CD8-positive, alpha-beta memory T cell (primary cell): ENCODE measurements at regions of chr1 and their contacts with region 1.

Region 1: GRCh38 chr1:150561974-150562445 is 12.8 kb downstream of the ADAMTSL4 start:
- DNase-seq: peak; percentile 60 to 83 (median 70)
- H3K4me3 ChIP-seq: peak overlapping the region; percentile 91
- H3K4me3 Mint-ChIP-seq: peak overlapping the region; percentile 85 to 98 (median 97)
- H3K27ac ChIP-seq: peak overlapping the region; percentile 94
- H3K27ac Mint-ChIP-seq: peak overlapping the region; percentile 96 to 100 (median 98)
- H3K4me1 ChIP-seq: peaks cover 64% of the 10 kb centered on the region
- H3K4me1 Mint-ChIP-seq: peaks cover 59 to 69% (median 59%) of the 10 kb centered on the region in 3 donors
- H3K27me3 ChIP-seq: no peaks in the 10 kb centered on the region
- H3K27me3 Mint-ChIP-seq: no peaks in the 10 kb centered on the region

Region 2: GRCh38 chr1:150479927-150480352 is 82.1 kb before region 1 on chr1:
- CTCF ChIA-PET with region 1: no interaction called
- POLR2A ChIA-PET with region 1: no interaction called
- DNase-seq: no peak
- H3K4me3 ChIP-seq: no peak overlapping the region
- H3K4me3 Mint-ChIP-seq: no peak overlapping the region
- H3K27ac ChIP-seq: no peak overlapping the region
- H3K27ac Mint-ChIP-seq: peak overlapping the region in 1 of 8 donors; percentile 14
- H3K4me1 ChIP-seq: no peaks in the 10 kb centered on the region
- H3K4me1 Mint-ChIP-seq: peaks cover 0 to 7% (median 0%) of the 10 kb centered on the region in 3 donors
- H3K27me3 ChIP-seq: no peaks in the 10 kb centered on the region
- H3K27me3 Mint-ChIP-seq: no peaks in the 10 kb centered on the region

Region 3: DNA sequence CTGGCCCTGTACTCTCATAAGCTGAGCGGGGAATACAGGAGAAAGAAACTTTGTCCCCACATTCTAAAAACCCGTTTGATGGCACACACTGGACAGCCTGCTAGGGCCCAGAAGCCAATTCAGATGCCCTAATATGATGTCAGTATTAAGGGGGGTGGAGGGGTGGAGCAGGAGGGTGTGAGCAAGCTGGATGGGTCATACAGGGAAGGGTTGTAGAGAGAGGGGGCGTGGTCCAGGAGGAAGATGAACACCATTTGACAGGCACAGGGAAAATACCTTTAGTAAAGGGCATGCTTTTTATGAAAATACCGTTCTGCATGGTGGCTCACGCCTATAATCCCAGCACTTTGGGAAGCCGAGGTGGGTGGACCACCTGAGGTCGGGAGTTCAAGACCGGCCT is 68.8 kb before region 1 on chr1:
- CTCF ChIA-PET with region 1: no interaction called
- POLR2A ChIA-PET with region 1: no interaction called
- DNase-seq: no peak
- H3K4me3 ChIP-seq: no peak overlapping the region
- H3K4me3 Mint-ChIP-seq: no peak overlapping the region
- H3K27ac ChIP-seq: no peak overlapping the region
- H3K27ac Mint-ChIP-seq: no peak overlapping the region
- H3K4me1 ChIP-seq: peaks cover 2% of the 10 kb centered on the region
- H3K4me1 Mint-ChIP-seq: peaks cover 7 to 11% (median 7%) of the 10 kb centered on the region in 3 donors
- H3K27me3 ChIP-seq: no peaks in the 10 kb centered on the region
- H3K27me3 Mint-ChIP-seq: no peaks in the 10 kb centered on the region

Region 4: GRCh38 chr1:150548632-150549495 is 13.1 kb before region 1 on chr1 and contains the start of gene ADAMTSL4:
- CTCF ChIA-PET with region 1: interaction called, 40 read pairs
- POLR2A ChIA-PET with region 1: interaction called, 15 read pairs
- DNase-seq: peak in 1 of 5 donors; percentile 33
- H3K4me3 ChIP-seq: peak within 1 kb of the TSS; percentile 56
- H3K4me3 Mint-ChIP-seq: peak within 1 kb of the TSS; percentile 76 to 92 (median 81)
- H3K27ac ChIP-seq: peak within 1 kb of the TSS; percentile 67
- H3K27ac Mint-ChIP-seq: peak within 1 kb of the TSS in 2 of 8 donors; percentile 29 to 78
- H3K4me1 ChIP-seq: peaks cover 7% of the 10 kb centered on the region
- H3K4me1 Mint-ChIP-seq: peaks cover 11 to 31% (median 14%) of the 10 kb centered on the region in 3 donors
- H3K27me3 ChIP-seq: no peaks in the 10 kb centered on the region
- H3K27me3 Mint-ChIP-seq: peaks cover 24 to 26% of the 10 kb centered on the region in 2 donors
- total RNA-seq, gene ADAMTSL4: 0.22 to 0.31 TPM

Region 5: GRCh38 chr1:150606463-150607148 is 44.6 kb after region 1 on chr1:
- CTCF ChIA-PET with region 1: interaction called, 11 read pairs
- POLR2A ChIA-PET with region 1: interaction called, 4 read pairs
- DNase-seq: no peak
- H3K4me3 ChIP-seq: no peak overlapping the region
- H3K4me3 Mint-ChIP-seq: no peak overlapping the region
- H3K27ac ChIP-seq: no peak overlapping the region
- H3K27ac Mint-ChIP-seq: peak overlapping the region in 3 of 8 donors; percentile 5 to 89 (median 17)
- H3K4me1 ChIP-seq: peaks cover 11% of the 10 kb centered on the region
- H3K4me1 Mint-ChIP-seq: peaks cover 7 to 27% (median 11%) of the 10 kb centered on the region in 3 donors
- H3K27me3 ChIP-seq: no peaks in the 10 kb centered on the region
- H3K27me3 Mint-ChIP-seq: no peaks in the 10 kb centered on the region

Region 6: DNA sequence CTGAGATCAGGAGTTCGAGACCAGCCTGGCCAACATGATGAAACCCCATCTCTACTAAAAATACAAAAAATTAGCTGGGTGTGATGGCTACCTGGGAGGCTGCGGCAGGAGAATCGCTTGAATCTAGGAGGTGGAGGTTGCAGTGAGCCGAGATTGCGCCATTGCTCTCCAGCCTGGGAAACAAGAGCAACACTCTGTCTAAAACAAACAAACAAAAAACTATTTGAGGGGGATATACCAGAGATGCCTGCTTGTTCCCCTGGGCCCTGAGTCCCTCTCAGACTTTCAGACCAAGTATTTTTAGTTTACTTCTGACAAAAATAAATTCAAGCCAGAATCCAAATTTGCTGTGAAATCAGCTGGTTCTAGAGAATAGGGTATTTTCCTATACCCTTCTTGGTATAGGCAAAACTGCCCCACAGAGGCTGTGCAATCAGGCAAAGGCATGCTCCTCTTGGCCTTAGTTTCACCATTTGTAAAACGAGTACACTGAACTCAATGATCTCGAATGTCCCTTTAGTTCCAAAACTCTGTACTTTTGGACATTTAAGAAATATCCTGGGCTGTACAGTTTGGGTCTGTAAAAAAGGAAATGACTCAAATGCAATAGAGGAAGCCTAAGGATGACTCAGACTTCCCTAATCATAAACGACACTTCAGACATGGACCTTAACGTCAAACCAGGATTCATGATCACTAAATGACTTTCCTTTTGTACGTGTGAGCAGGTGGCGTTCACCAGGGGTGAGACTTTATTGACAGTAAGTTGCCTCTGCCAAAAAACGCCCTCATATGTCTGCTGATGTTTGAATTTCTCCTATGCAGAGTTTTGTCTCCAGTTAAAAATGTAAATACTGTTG is 51.3 kb after region 1 on chr1:
- CTCF ChIA-PET with region 1: interaction called, 244 read pairs
- POLR2A ChIA-PET with region 1: interaction called, 15 read pairs
- DNase-seq: peak in 4 of 5 donors; percentile 36 to 70 (median 51)
- H3K4me3 ChIP-seq: no peak overlapping the region
- H3K4me3 Mint-ChIP-seq: peak overlapping the region; percentile 27 to 75 (median 59)
- H3K27ac ChIP-seq: peak overlapping the region; percentile 76
- H3K27ac Mint-ChIP-seq: peak overlapping the region; percentile 94 to 100 (median 99)
- H3K4me1 ChIP-seq: peaks cover 51% of the 10 kb centered on the region
- H3K4me1 Mint-ChIP-seq: peaks cover 50 to 72% (median 56%) of the 10 kb centered on the region in 3 donors
- H3K27me3 ChIP-seq: no peaks in the 10 kb centered on the region
- H3K27me3 Mint-ChIP-seq: no peaks in the 10 kb centered on the region

Region 7: DNA sequence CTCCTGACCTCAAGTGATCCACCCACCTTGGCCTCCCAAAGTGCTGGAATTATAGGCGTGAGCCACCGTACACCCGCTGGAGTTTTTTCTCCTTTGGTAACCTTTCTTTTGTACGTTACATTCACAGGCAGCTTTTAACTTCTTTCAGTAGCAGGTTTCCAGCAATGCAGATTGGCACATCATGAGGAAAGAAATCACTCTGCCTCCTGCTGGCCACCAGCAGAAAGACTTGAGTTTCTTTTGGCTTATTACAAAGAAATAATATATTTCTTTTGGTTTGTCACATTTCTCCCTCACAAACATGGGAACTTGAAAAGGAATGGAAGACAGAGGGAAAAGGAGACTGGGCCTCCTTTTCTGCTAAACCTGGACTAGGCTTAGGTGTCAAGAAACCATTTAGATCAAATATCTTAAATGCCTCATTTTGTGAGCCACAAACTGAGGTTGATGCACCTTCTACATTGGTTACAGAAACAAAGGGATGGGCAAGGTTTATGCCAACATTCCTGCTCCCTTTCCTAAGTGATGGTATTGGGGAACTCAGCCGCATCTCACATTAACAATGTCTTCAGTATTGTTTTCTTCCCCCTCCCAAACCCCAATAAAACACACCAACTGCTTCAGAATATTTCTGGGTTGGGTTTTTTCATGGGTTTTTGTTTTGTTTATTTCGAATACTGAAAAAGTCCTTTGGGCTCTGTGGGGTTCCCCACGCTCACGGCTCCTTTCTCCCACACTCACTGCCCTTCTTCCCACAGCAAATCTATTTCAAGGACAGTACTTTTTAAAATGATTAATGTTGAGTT is 59.7 kb after region 1 on chr1:
- CTCF ChIA-PET with region 1: interaction called, 244 read pairs
- POLR2A ChIA-PET with region 1: interaction called, 42 read pairs
- DNase-seq: peak; percentile 40 to 79 (median 54)
- H3K4me3 ChIP-seq: no peak overlapping the region
- H3K4me3 Mint-ChIP-seq: peak overlapping the region in 2 of 7 donors; percentile 35 to 37
- H3K27ac ChIP-seq: no peak overlapping the region
- H3K27ac Mint-ChIP-seq: peak overlapping the region; percentile 35 to 95 (median 86)
- H3K4me1 ChIP-seq: peaks cover 30% of the 10 kb centered on the region
- H3K4me1 Mint-ChIP-seq: peaks cover 29 to 63% (median 55%) of the 10 kb centered on the region in 3 donors
- H3K27me3 ChIP-seq: no peaks in the 10 kb centered on the region
- H3K27me3 Mint-ChIP-seq: no peaks in the 10 kb centered on the region

Region 8: GRCh38 chr1:150629115-150629928 is 67.3 kb after region 1 on chr1 and contains the start of gene ENSA:
- CTCF ChIA-PET with region 1: interaction called, 244 read pairs
- POLR2A ChIA-PET with region 1: interaction called, 51 read pairs
- DNase-seq: peak; percentile 94 to 99 (median 98)
- H3K4me3 ChIP-seq: peak within 1 kb of the TSS; percentile 75
- H3K4me3 Mint-ChIP-seq: no peak within 1 kb of the TSS
- H3K27ac ChIP-seq: peak within 1 kb of the TSS; percentile 92
- H3K27ac Mint-ChIP-seq: peak within 1 kb of the TSS in 1 of 8 donors; percentile 80
- H3K4me1 ChIP-seq: peaks cover 21% of the 10 kb centered on the region
- H3K4me1 Mint-ChIP-seq: peaks cover 10 to 21% (median 19%) of the 10 kb centered on the region in 3 donors
- H3K27me3 ChIP-seq: no peaks in the 10 kb centered on the region
- H3K27me3 Mint-ChIP-seq: no peaks in the 10 kb centered on the region
- total RNA-seq, gene ENSA: 249 to 252 TPM